ENCODE measurements at regions of chr22 and their contacts with region 1.

Region 1: DNA sequence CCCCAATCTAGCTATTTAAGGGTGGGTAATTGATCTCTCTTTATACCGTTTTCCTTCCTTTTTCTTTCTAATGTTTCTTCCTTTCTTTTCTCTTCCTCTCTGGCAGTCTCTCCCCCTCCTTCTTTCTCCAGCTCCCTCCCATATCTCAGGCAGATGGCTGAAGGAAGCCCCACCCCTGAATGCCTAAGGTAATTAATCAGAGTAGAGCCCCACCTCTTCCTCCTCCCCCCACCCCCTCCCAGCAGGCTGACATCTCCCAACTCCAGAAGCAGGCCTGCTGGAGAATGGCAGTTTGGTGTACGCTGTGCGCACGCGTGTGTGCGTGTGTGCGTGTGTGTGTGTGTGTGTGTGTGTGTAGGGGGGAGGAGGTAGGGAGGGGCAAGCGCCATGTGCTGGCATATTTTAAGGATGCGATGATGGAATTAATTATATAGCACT is 122.6 kb downstream of the APOL5 start:
- DNase-seq: peak; percentile 95
- ATAC-seq: peak; percentile 90
- H3K4me3 ChIP-seq: peak overlapping the region; percentile 53 to 69
- H3K27ac ChIP-seq: peak overlapping the region; percentile 46; the same call in 1 of the 2 replicates
- H3K4me1 ChIP-seq: peaks cover 46 to 75% of the 10 kb centered on the region in 2 experiments
- H3K27me3 ChIP-seq: no peaks in the 10 kb centered on the region
- CTCF ChIP-seq: no peak
- POLR2A ChIP-seq: no peak
- RAD21 ChIP-seq: peak; percentile 15; the same call in 1 of the 2 replicates

Region 2: GRCh38 chr22:35376728-35377472 is 463.4 kb before region 1 on chr22:
- CTCF ChIA-PET with region 1: no interaction called
- POLR2A ChIA-PET with region 1: no interaction called
- RAD21 ChIA-PET with region 1: no interaction called
- intact Hi-C with region 1: loop called (anchors 10 kb)
- DNase-seq: peak; percentile 83
- ATAC-seq: peak; percentile 27
- H3K4me3 ChIP-seq: peak overlapping the region in 1 of 2 experiments; percentile 18; a peak in 3 of 4 replicates
- H3K27ac ChIP-seq: peak overlapping the region; percentile 82
- H3K4me1 ChIP-seq: peaks cover 37 to 78% of the 10 kb centered on the region in 2 experiments
- H3K27me3 ChIP-seq: no peaks in the 10 kb centered on the region
- CTCF ChIP-seq: no peak
- POLR2A ChIP-seq: no peak
- RAD21 ChIP-seq: no peak

Region 3: GRCh38 chr22:35914665-35915476 is 74.5 kb after region 1 on chr22:
- CTCF ChIA-PET with region 1: no interaction called
- POLR2A ChIA-PET with region 1: no interaction called
- RAD21 ChIA-PET with region 1: no interaction called
- intact Hi-C with region 1: loop called (anchors 5 kb)
- DNase-seq: peak; percentile 80
- ATAC-seq: peak; percentile 98
- H3K4me3 ChIP-seq: peak overlapping the region; percentile 25 to 48
- H3K27ac ChIP-seq: peak overlapping the region; percentile 41
- H3K4me1 ChIP-seq: peaks cover 12 to 24% of the 10 kb centered on the region in 2 experiments; a peak in 3 of 4 replicates
- H3K27me3 ChIP-seq: no peaks in the 10 kb centered on the region
- CTCF ChIP-seq: no peak
- POLR2A ChIP-seq: no peak
- RAD21 ChIP-seq: no peak

Region 4: DNA sequence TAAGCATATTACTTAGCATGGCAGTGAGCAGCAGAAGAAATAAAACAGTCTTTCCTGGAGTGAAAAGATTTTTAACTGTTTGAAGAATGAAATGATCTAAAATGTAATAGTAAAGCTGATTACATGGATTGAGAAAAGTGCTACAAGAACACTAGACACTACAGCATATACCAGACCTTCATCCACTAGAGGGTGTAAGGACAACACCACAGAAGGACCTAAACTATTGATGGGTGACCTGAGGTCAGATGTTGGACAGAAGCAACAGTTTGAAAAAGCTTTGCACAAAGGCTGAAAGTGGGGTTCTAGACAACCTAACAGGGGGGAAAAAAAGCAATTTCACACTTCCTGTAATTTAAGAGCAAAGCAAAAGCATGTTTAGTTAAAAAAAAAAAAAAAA is 90.6 kb after region 1 on chr22:
- CTCF ChIA-PET with region 1: no interaction called
- POLR2A ChIA-PET with region 1: no interaction called
- RAD21 ChIA-PET with region 1: no interaction called
- intact Hi-C with region 1: no loop called
- DNase-seq: peak; percentile 44
- ATAC-seq: peak; percentile 85
- H3K4me3 ChIP-seq: no peak overlapping the region
- H3K27ac ChIP-seq: no peak overlapping the region
- H3K4me1 ChIP-seq: no peaks in the 10 kb centered on the region
- H3K27me3 ChIP-seq: no peaks in the 10 kb centered on the region
- CTCF ChIP-seq: peak; percentile 54 to 85 (median 64)
- POLR2A ChIP-seq: no peak
- RAD21 ChIP-seq: peak; percentile 81

Region 5: GRCh38 chr22:36369922-36370791 is 529.8 kb after region 1 on chr22:
- CTCF ChIA-PET with region 1: no interaction called
- POLR2A ChIA-PET with region 1: no interaction called
- RAD21 ChIA-PET with region 1: no interaction called
- intact Hi-C with region 1: no loop called
- DNase-seq: no peak
- ATAC-seq: peak; percentile 35
- H3K4me3 ChIP-seq: no peak overlapping the region
- H3K27ac ChIP-seq: peak overlapping the region; percentile 79
- H3K4me1 ChIP-seq: peaks cover 97 to 100% of the 10 kb centered on the region in 2 experiments
- H3K27me3 ChIP-seq: no peaks in the 10 kb centered on the region
- CTCF ChIP-seq: no peak
- POLR2A ChIP-seq: no peak
- RAD21 ChIP-seq: no peak